ENCODE measurements at regions of chr19 and their contacts with region 1.

Region 1: DNA sequence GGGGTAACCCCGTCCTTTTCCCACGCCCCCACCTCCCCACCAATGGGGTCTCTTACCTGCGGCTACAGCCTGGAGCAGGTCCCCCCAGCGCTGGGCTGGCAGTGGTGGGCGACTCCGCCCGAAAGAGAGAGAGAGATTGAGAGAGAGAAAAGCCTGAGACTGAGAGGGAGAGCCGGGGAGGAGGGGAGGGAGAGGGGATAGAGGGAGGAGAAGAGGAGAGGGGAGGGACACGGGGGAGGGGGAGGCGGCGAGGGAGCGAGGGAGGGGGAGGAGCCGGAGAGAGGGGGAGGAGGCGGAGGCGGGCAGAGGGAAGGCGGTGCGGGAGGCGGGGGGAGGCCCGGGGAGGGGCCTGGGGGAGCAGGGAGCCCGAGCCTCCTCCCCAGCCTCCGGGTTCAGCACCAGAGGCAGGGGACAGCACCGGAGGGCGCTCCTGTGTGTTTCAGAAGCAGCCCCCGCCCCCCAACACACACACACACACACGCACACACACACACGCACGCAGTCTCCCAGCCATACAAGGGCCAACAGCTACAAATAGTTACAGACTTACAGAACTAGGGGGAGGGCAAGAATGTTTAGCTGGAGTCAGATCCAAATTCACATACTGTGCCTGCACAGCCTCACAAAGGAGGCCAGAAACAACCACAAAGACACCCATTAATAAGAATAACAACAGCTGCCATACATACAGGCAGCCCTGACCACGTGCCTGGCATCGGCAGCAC is at the start of gene SLC8A2:
- DNase-seq: peak; percentile 70 to 89
- H3K4me3 ChIP-seq: peak within 1 kb of the TSS; percentile 61 to 86 (median 68)
- H3K27ac ChIP-seq: no peak within 1 kb of the TSS
- H3K4me1 ChIP-seq: peaks cover 4 to 33% (median 18%) of the 10 kb centered on the region in 4 experiments
- H3K27me3 ChIP-seq: peaks cover 0 to 5% (median 3%) of the 10 kb centered on the region in 4 experiments; a peak in 3 of 7 replicates
- CTCF ChIP-seq: no peak
- EP300 ChIP-seq: no peak
- POLR2A ChIP-seq: no peak
- RAD21 ChIP-seq: no peak
- total RNA-seq, gene SLC8A2: 7.3 and 8.3 TPM in 2 replicates

Region 2: GRCh38 chr19:47447470-47448359 is 24.2 kb before region 1 on chr19:
- CTCF ChIA-PET with region 1: interaction called, 16 read pairs
- POLR2A ChIA-PET with region 1: interaction called, 29 read pairs
- DNase-seq: peak; percentile 95 to 100
- H3K4me3 ChIP-seq: peak overlapping the region; percentile 56 to 79 (median 70)
- H3K27ac ChIP-seq: peak overlapping the region; percentile 56; the same call in 1 of the 2 replicates
- H3K4me1 ChIP-seq: peaks cover 7 to 18% (median 11%) of the 10 kb centered on the region in 4 experiments
- H3K27me3 ChIP-seq: peaks cover 0 to 9% (median 9%) of the 10 kb centered on the region in 4 experiments; a peak in 5 of 7 replicates
- CTCF ChIP-seq: peak in 1 of 3 experiments; percentile 0; a peak in 1 of 4 replicates
- EP300 ChIP-seq: no peak
- POLR2A ChIP-seq: no peak
- RAD21 ChIP-seq: no peak

Region 3: DNA sequence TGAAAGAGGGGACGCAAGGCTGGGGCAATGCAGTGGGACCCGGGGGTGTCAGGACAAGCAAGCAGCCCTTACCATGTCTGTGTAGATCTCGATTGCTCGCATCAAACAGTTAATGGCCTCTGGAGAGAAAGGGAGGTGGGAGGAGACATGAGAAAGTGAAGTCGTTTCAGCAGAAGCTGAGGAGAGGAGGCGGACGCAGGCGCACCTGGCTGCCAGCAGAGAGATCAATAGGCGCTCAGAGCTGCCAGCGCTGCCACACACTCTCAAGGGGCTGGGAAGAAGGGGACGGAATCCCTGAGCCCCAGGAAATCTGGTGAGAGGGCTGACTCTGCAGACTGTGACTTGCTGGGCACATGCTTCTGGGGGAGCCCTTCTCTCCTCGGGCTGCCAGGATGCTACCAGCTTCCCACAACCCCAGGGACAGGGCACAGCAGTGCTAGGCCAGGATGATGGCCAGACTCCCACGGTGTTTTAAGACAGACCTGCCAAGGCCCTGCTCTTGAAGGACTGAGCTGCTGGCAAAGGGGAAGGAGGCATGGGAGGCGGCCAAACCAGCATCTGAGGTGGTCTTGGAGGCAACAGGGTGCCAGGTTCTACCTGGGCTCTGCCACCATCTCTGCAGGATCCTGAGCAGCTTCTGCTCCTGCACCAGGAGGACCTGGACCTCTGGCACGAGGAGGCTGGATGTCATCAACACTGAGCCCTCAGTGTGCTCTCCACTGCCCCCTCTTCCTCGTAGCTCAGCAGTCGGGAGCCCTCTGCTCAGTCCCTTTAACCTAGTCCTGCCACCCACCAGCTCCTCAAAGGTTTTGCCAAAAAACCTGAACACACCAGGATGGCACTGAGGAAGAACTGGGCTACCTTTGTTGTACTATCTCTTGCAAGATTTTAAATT is 23.8 kb after region 1 on chr19:
- CTCF ChIA-PET with region 1: no interaction called
- POLR2A ChIA-PET with region 1: no interaction called
- DNase-seq: no peak
- H3K4me3 ChIP-seq: no peak overlapping the region
- H3K27ac ChIP-seq: no peak overlapping the region
- H3K4me1 ChIP-seq: peaks cover 0 to 8% (median 5%) of the 10 kb centered on the region in 4 experiments; a peak in 4 of 7 replicates
- H3K27me3 ChIP-seq: no peaks in the 10 kb centered on the region
- CTCF ChIP-seq: peak in 1 of 3 experiments; percentile 2; a peak in 1 of 4 replicates
- EP300 ChIP-seq: no peak
- POLR2A ChIP-seq: no peak
- RAD21 ChIP-seq: no peak

Region 4: GRCh38 chr19:47540728-47541127 is 68.8 kb after region 1 on chr19:
- CTCF ChIA-PET with region 1: no interaction called
- POLR2A ChIA-PET with region 1: no interaction called
- DNase-seq: no peak
- H3K4me3 ChIP-seq: no peak overlapping the region
- H3K27ac ChIP-seq: no peak overlapping the region
- H3K4me1 ChIP-seq: peaks cover 0 to 4% (median 0%) of the 10 kb centered on the region in 4 experiments; a peak in 1 of 7 replicates
- H3K27me3 ChIP-seq: no peaks in the 10 kb centered on the region
- CTCF ChIP-seq: peak; percentile 10 to 64 (median 39); a peak in 3 of 4 replicates
- EP300 ChIP-seq: no peak
- POLR2A ChIP-seq: no peak
- RAD21 ChIP-seq: peak; percentile 42 to 59; a peak in 3 of 4 replicates

Region 5: DNA sequence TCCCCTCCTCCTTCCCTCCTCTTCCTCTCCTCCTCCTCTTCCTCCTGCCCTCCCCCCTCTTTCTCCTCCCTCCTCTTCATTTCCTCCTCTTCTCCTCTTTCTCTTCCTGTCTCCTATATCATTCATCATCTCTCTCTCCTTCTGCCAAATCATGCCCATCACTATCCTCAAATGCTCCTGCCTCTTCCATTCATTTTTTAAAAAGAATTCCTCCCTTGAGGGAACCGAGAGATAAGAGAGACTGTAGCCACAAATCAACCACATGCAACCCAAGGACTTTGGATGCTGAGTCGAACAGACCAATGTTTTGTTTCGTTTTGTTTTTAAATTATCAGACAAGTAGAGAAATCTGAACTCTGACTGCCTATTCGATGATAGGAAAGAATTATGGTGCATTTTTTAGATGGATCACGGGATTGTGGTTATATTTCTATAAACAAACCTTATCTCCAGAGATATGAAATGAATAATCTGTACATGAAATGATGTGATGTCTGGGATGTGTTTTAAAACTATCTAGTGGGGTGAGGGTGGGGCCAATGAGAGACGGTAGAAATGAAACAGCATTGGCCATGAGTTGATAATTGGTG is 110.5 kb after region 1 on chr19:
- CTCF ChIA-PET with region 1: no interaction called
- POLR2A ChIA-PET with region 1: no interaction called
- DNase-seq: no peak
- H3K4me3 ChIP-seq: no peak overlapping the region
- H3K27ac ChIP-seq: no peak overlapping the region
- H3K4me1 ChIP-seq: no peaks in the 10 kb centered on the region
- H3K27me3 ChIP-seq: no peaks in the 10 kb centered on the region
- CTCF ChIP-seq: no peak
- EP300 ChIP-seq: no peak
- POLR2A ChIP-seq: no peak
- RAD21 ChIP-seq: no peak